ENCODE measurements at regions of chr6 and their contacts with region 1.

Region 1: DNA sequence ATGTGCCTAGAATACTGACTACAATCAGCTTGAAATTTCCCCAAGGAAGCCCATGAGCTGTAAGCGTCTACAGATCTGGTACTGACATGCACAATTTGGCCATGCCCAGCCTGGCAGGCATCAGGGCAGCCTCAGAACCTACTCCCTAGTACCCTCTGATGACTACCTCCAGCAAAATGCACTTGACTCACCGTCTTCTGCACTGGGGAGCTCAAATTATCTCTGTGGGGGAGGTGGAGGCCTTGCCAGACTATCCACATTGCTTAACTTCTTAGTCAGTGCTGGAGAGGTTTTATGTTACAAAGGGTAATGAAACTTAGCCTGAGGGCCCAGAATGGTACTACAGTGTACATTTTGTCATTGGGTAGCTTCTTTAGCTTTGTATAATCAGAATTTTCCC is 126.1 kb upstream of the ADGRF1 start:
- DNase-seq: peak in 1 of 4 experiments; percentile 30
- ATAC-seq: peak; percentile 64
- H3K4me3 ChIP-seq: no peak overlapping the region
- H3K27ac ChIP-seq: no peak overlapping the region
- H3K4me1 ChIP-seq: no peaks in the 10 kb centered on the region
- H3K27me3 ChIP-seq: no peaks in the 10 kb centered on the region
- CTCF ChIP-seq: no peak
- EP300 ChIP-seq: no peak
- POLR2A ChIP-seq: no peak
- RAD21 ChIP-seq: no peak

Region 2: GRCh38 chr6:47016261-47016660 is 151.9 kb before region 1 on chr6:
- CTCF ChIA-PET with region 1: no interaction called
- POLR2A ChIA-PET with region 1: no interaction called
- in situ Hi-C with region 1: no loop called
- intact Hi-C with region 1: no loop called
- DNase-seq: no peak
- ATAC-seq: no peak
- H3K4me3 ChIP-seq: no peak overlapping the region
- H3K27ac ChIP-seq: no peak overlapping the region
- H3K4me1 ChIP-seq: no peaks in the 10 kb centered on the region
- H3K27me3 ChIP-seq: no peaks in the 10 kb centered on the region; a peak in 2 of 5 replicates
- CTCF ChIP-seq: no peak
- EP300 ChIP-seq: no peak
- POLR2A ChIP-seq: no peak
- RAD21 ChIP-seq: no peak

Region 3: GRCh38 chr6:47156196-47156595 is 12.0 kb before region 1 on chr6:
- CTCF ChIA-PET with region 1: no interaction called
- POLR2A ChIA-PET with region 1: interaction called, 13 read pairs
- in situ Hi-C with region 1: no loop called
- intact Hi-C with region 1: no loop called
- DNase-seq: no peak
- ATAC-seq: no peak
- H3K4me3 ChIP-seq: no peak overlapping the region
- H3K27ac ChIP-seq: no peak overlapping the region
- H3K4me1 ChIP-seq: no peaks in the 10 kb centered on the region
- H3K27me3 ChIP-seq: peaks cover 17 to 18% of the 10 kb centered on the region in 2 experiments
- CTCF ChIP-seq: no peak
- EP300 ChIP-seq: no peak
- POLR2A ChIP-seq: no peak
- RAD21 ChIP-seq: no peak

Region 4: GRCh38 chr6:47264775-47265184 is 96.6 kb after region 1 on chr6:
- CTCF ChIA-PET with region 1: no interaction called
- POLR2A ChIA-PET with region 1: no interaction called
- in situ Hi-C with region 1: no loop called
- intact Hi-C with region 1: no loop called
- DNase-seq: no peak
- ATAC-seq: no peak
- H3K4me3 ChIP-seq: no peak overlapping the region
- H3K27ac ChIP-seq: no peak overlapping the region
- H3K4me1 ChIP-seq: no peaks in the 10 kb centered on the region
- H3K27me3 ChIP-seq: no peaks in the 10 kb centered on the region; a peak in 1 of 5 replicates
- CTCF ChIP-seq: no peak
- EP300 ChIP-seq: no peak
- POLR2A ChIP-seq: no peak
- RAD21 ChIP-seq: no peak

Measured in K562 (cell line).